ENCODE measurements at regions of chr20 and their contacts with region 1.

Region 1: DNA sequence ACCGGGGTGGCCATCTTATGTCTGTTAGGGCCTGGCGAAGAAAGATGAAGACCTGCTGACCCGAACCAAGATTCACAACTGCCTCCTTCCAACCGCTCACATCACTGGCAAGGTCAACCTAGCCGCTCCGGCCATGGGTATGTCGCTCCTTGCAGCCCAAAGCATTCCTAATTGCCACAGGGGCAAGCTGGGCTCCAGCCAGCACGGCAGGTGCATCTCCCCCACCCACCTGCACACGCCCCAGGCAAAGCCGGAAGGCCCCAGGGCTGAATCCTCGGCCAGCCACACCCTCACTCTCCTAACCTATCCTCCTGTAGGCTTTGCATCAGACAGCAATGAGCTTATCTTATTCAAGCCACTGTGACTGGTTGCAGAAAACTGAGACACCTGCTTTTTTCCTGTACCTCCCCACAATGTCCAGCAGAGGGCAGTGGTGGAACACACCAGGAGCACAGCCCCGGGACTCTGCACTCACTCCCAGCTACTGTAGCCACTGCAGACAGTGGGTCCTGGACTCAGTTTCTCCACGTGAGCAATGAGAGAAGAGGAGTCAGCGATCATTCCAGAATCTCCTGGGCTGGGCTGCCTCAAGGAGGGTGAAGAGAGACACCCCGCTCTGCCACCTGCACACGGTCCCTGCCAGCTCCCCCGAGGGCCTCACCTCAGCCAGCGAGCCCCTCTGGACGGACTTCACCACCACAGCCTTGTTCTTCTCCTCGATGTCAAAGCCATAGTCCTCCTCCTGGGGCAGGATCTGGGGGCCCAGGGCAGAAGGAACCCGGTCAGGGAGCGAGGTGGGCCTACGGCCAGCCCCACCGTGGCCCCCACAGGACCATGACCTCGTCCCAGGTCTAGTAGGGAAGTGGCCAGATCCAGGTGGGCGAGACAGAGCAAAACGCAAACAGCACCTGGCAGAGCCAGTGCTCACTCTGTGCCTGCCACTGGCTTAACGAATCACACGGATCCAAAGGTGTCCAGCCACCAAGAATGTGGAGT is 170.0 kb downstream of the PREX1 start:
- DNase-seq: peak; percentile 71
- ATAC-seq: peak; percentile 95
- H3K4me3 Mint-ChIP-seq: no peak overlapping the region
- H3K27ac Mint-ChIP-seq: peak overlapping the region; percentile 63
- H3K4me1 Mint-ChIP-seq: peaks cover 17% of the 10 kb centered on the region
- H3K27me3 Mint-ChIP-seq: no peaks in the 10 kb centered on the region
- CTCF ChIP-seq: peak; percentile 88

Region 2: DNA sequence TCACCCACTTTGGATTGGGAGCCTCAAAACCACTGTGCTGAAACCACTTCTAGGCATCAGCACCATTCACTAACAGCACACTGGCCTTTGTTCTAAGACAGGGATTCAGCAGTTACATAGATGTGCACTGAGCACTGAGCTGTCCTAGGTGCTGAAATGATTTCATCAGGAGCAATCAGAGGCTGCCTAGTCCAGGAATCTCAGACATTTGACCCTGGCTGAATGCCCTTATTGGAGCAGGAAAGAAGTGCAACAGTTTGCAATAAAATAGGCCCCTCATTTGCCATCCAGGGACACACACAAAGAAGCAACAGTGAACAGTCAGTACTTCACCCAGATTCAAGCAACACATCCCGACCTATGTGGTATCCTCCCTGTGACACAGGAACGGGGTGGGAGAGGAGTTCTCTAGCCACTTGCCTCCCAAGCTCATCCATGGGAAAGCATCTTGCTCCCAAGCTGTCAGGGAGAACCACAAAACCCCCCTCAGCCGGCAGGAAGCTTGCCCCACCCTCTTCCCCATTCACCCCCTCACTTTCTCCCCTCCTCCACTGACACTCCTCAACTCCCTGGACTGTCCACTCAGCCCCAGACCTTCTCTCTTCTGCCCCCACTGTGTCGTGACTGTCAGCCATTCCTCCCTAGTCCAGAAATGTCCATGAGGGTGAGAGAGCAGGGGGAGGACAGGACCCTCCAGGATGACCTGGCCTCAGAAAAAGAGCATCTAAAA is 134.4 kb before region 1 on chr20:
- CTCF ChIA-PET with region 1: no interaction called
- POLR2A ChIA-PET with region 1: no interaction called
- intact Hi-C with region 1: no loop called
- DNase-seq: no peak
- ATAC-seq: no peak
- H3K4me3 Mint-ChIP-seq: no peak overlapping the region
- H3K27ac Mint-ChIP-seq: no peak overlapping the region
- H3K4me1 Mint-ChIP-seq: no peaks in the 10 kb centered on the region
- H3K27me3 Mint-ChIP-seq: peaks cover 17% of the 10 kb centered on the region
- CTCF ChIP-seq: no peak

Region 3: DNA sequence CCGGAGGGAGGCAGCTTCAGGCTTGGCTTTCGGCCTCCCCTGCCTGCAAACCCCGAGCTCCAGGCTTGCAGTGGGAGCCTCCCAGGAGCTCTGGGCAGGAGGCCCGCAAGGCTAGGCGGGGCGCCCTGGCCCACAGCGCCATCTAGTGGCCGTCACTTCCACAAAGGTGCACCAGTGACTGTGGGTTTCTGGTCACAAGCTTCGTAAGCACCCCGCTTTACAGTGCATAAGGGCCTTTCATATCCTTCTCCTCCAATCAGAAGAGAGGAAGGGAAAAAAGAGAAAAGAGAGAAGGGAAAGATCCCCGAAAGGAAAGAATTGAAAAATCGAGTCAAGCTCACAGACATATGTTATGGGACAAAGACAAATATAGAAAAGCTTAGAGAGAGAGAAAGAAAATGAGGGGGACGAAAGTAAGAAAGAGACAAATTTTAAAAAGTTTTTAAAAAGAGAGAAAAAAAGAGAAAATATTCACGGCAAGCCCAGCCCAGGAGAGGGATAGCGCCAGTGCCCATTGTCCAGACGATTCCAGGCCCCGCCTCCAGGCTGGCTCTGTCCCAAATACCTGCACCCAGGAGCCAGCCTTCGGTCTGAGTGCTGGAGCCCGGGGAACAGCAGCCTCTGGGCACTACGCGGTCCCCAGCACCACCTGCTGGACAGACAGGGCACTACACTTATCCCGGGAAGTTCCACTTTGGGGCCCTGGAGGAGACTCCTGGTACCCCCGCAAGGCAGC is 37.1 kb before region 1 on chr20:
- CTCF ChIA-PET with region 1: interaction called, 12 read pairs
- POLR2A ChIA-PET with region 1: no interaction called
- intact Hi-C with region 1: no loop called
- DNase-seq: peak; percentile 84
- ATAC-seq: peak; percentile 91
- H3K4me3 Mint-ChIP-seq: peak overlapping the region; percentile 22
- H3K27ac Mint-ChIP-seq: no peak overlapping the region
- H3K4me1 Mint-ChIP-seq: peaks cover 6% of the 10 kb centered on the region
- H3K27me3 Mint-ChIP-seq: no peaks in the 10 kb centered on the region
- CTCF ChIP-seq: peak; percentile 90

Region 4: GRCh38 chr20:48717095-48717672 is 59.4 kb after region 1 on chr20:
- CTCF ChIA-PET with region 1: interaction called, 11 read pairs
- POLR2A ChIA-PET with region 1: no interaction called
- intact Hi-C with region 1: no loop called
- DNase-seq: peak; percentile 38
- ATAC-seq: peak; percentile 8
- H3K4me3 Mint-ChIP-seq: peak overlapping the region; percentile 20
- H3K27ac Mint-ChIP-seq: peak overlapping the region; percentile 99
- H3K4me1 Mint-ChIP-seq: peaks cover 88% of the 10 kb centered on the region
- H3K27me3 Mint-ChIP-seq: no peaks in the 10 kb centered on the region
- CTCF ChIP-seq: no peak

Region 5: GRCh38 chr20:48828022-48828743 is 170.4 kb after region 1 on chr20:
- CTCF ChIA-PET with region 1: interaction called, 10 read pairs
- POLR2A ChIA-PET with region 1: interaction called, 3 read pairs
- intact Hi-C with region 1: loop called (anchors 5 kb)
- DNase-seq: peak; percentile 82
- ATAC-seq: peak; percentile 50
- H3K4me3 Mint-ChIP-seq: peak overlapping the region; percentile 80
- H3K27ac Mint-ChIP-seq: peak overlapping the region; percentile 83
- H3K4me1 Mint-ChIP-seq: peaks cover 35% of the 10 kb centered on the region
- H3K27me3 Mint-ChIP-seq: no peaks in the 10 kb centered on the region
- CTCF ChIP-seq: no peak

Region 6: GRCh38 chr20:48904365-48905296 is 246.9 kb after region 1 on chr20:
- CTCF ChIA-PET with region 1: interaction called, 70 read pairs
- POLR2A ChIA-PET with region 1: interaction called, 6 read pairs
- intact Hi-C with region 1: loop called (anchors 1 kb)
- DNase-seq: peak; percentile 87
- ATAC-seq: peak; percentile 87
- H3K4me3 Mint-ChIP-seq: no peak overlapping the region
- H3K27ac Mint-ChIP-seq: no peak overlapping the region
- H3K4me1 Mint-ChIP-seq: peaks cover 9% of the 10 kb centered on the region
- H3K27me3 Mint-ChIP-seq: peaks cover 2% of the 10 kb centered on the region
- CTCF ChIP-seq: peak; percentile 96

Measured in activated CD8-positive, alpha-beta T cell treated with anti-CD3 and anti-CD28 coated beads for 36 hours (primary cell).